Endothelial cell of umbilical vein (primary cell): ENCODE measurements at regions of chr9 and their contacts with region 1.

Region 1: DNA sequence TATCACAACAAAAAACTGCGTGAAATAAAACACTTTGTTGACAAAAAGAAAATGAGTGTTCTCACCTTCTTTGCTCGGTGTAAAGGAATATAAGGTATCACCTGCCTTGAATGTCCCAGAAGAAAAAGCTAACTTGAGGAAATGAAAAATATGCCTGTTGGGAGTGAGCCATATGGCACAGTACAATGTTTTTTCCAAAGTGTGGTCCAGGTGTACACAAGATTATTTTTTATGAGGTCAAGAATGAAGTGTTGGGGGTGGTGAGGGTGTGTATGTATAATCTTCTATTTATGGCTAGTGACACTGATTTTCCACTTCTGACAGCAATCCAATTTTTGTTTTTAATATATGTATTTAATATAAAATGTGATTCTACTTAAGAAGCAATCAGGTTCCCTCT is 134.4 kb downstream of the RFX3 start:
- DNase-seq: no peak
- H3K4me3 ChIP-seq: no peak overlapping the region
- H3K27ac ChIP-seq: no peak overlapping the region
- H3K4me1 ChIP-seq: no peaks in the 10 kb centered on the region
- H3K27me3 ChIP-seq: no peaks in the 10 kb centered on the region
- CTCF ChIP-seq: no peak
- POLR2A ChIP-seq: no peak

Region 2: DNA sequence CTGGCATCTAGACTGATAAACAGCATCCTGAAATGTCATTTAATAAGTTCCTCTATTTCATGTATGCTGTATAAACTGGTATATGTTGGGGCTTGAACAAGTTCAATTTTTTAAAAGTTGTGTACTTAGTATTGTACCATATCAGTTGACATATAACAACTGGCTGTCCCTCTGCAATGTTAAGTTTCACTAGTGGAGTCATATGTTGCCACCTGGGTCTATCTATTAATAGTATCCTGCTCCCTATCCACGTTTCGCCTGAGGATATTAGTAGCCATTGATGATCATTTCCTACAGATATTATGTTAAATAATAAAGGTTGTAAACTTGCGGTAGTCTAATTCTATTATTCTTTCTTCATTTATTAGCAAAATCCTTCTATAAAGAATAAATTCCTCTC is 43.2 kb before region 1 on chr9:
- CTCF ChIA-PET with region 1: no interaction called
- POLR2A ChIA-PET with region 1: no interaction called
- dilution Hi-C with region 1: no loop called
- intact Hi-C with region 1: loop called (anchors 5 kb)
- DNase-seq: no peak
- H3K4me3 ChIP-seq: no peak overlapping the region
- H3K27ac ChIP-seq: no peak overlapping the region
- H3K4me1 ChIP-seq: no peaks in the 10 kb centered on the region
- H3K27me3 ChIP-seq: no peaks in the 10 kb centered on the region
- CTCF ChIP-seq: no peak
- POLR2A ChIP-seq: no peak